Posterior vena cava (tissue), 2 donors: ENCODE measurements at regions of chr10 and their contacts with region 1.

Region 1: GRCh38 chr10:118594392-118595063 is 920 bp downstream of the PRLHR start:
- DNase-seq: no peak

Region 2: GRCh38 chr10:119542988-119543813 is 948.7 kb after region 1 on chr10:
- intact Hi-C with region 1: loop called in 1 of 2 experiments (anchors 5 kb)
- DNase-seq: peak; percentile 87